ENCODE measurements at regions of chr3 and their contacts with region 1.

Region 1: DNA sequence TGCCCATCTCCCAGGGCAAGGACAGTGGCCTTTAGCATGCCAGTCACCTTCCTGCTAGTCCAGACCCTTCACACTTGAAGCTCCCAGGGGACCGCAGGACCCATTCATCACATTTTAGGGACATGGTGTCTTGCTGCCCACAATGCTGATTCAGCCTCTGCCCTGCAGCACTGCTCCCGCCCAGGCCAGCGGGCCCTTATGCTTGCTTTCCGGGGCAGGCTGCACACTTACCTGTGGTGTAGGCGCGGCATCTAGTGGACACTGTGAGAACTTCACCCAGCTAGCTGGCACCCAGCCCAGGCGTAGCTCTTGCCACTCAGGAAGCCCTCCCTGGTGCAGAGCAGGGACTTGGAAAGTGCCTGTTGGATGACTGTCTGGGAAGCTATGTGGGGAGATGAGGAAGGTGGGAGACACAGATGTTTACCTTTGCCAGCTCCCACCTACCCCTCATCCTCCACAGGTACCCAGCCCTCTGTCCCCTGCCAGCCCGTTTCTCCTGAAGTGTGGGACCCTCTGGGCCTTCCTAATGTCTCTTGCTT is 26.2 kb upstream of the NR2C2 start:
- DNase-seq: peak; percentile 91
- ATAC-seq: peak; percentile 96
- H3K4me3 ChIP-seq: no peak overlapping the region
- H3K27ac ChIP-seq: no peak overlapping the region
- H3K4me1 ChIP-seq: peaks cover 4% of the 10 kb centered on the region
- H3K27me3 ChIP-seq: no peaks in the 10 kb centered on the region
- CTCF ChIP-seq: peak; percentile 97

Region 2: DNA sequence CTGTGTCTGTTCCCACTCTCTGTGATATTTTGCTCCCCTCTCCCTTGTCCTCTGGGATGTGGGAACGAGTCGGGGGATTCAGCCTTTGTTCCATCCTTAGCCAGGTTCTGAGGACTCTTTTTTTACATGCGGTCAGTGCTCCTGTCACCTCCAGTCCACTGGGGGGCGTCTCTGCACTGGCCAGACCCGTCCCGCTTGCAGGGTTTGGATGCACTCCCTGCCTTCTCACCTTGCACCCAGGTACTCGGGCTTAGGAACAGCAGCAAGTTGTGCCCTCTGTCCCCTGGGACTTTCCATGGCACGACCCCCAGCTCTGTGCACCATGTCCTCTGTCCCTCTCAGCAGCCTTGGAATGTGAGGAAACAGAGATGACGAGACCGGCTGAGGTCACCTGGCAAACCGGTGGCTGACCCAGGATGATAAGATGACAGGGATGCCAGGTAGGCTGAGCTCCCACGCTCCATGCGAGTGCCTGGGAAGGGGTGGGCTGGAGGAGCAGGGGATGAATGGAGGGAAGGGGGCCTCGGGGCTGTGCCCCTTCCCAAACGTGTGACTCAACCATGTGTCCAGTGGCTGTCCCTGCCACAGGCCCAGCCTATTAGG is 129.7 kb before region 1 on chr3:
- intact Hi-C with region 1: loop called (anchors 5 kb)
- DNase-seq: peak; percentile 76
- ATAC-seq: peak; percentile 82
- H3K4me3 ChIP-seq: no peak overlapping the region
- H3K27ac ChIP-seq: no peak overlapping the region
- H3K4me1 ChIP-seq: peaks cover 13% of the 10 kb centered on the region
- H3K27me3 ChIP-seq: peaks cover 4% of the 10 kb centered on the region
- CTCF ChIP-seq: peak; percentile 68

Region 3: DNA sequence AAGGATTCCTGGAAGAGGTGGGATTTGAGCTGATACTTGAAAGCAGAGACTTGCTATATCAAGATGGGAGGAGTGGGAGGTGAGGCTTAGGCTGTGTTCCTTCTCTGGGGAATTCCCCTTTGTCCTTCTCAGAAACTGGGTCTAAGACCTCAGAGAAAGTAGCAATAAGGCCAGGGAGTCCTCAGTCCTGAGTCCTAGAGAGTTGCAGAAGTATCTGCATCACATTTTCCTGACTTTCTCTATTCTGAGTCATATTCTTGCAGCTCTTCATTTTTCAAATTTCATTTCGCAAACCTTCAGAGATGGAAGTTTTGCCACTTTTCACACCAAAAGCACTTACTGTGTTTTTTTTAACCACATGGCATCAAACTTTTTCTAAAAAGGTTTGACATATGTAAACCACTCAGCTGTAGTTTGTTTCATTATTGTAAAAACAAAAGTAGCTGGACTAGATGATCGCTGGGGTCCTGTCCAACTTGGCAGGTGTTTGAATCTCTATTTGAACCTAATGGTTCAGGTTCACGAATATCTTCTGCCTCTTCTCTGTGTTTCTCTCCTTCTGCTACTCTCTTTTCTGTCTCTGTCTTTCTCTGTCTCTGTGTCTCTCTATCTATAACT is 579.1 kb after region 1 on chr3:
- intact Hi-C with region 1: no loop called
- DNase-seq: no peak
- ATAC-seq: peak; percentile 35
- H3K4me3 ChIP-seq: no peak overlapping the region
- H3K27ac ChIP-seq: no peak overlapping the region
- H3K4me1 ChIP-seq: peaks cover 9% of the 10 kb centered on the region
- H3K27me3 ChIP-seq: no peaks in the 10 kb centered on the region
- CTCF ChIP-seq: no peak